ENCODE measurements at regions of chr4 and their contacts with region 1.

Region 1: GRCh38 chr4:2963175-2963965 is at the starts of genes GRK4 and NOP14:
- DNase-seq: peak; percentile 98
- ATAC-seq: peak; percentile 93
- H3K4me3 ChIP-seq: peak within 1 kb of the TSS; percentile 48 to 86 (median 74)
- H3K4me3 Mint-ChIP-seq: peak within 1 kb of the TSS; percentile 96
- H3K27ac ChIP-seq: peak within 1 kb of the TSS; percentile 78 to 91
- H3K27ac Mint-ChIP-seq: peak within 1 kb of the TSS; percentile 96
- H3K4me1 ChIP-seq: peaks cover 20 to 25% of the 10 kb centered on the region in 2 donors
- H3K4me1 Mint-ChIP-seq: peaks cover 28% of the 10 kb centered on the region
- H3K27me3 ChIP-seq: no peaks in the 10 kb centered on the region
- H3K27me3 Mint-ChIP-seq: no peaks in the 10 kb centered on the region
- CTCF ChIP-seq: peak; percentile 48
- total RNA-seq, gene GRK4: 1.5 and 2.3 TPM in 2 replicates
- total RNA-seq, gene NOP14: 27.1 and 30.4 TPM in 2 replicates

Region 2: DNA sequence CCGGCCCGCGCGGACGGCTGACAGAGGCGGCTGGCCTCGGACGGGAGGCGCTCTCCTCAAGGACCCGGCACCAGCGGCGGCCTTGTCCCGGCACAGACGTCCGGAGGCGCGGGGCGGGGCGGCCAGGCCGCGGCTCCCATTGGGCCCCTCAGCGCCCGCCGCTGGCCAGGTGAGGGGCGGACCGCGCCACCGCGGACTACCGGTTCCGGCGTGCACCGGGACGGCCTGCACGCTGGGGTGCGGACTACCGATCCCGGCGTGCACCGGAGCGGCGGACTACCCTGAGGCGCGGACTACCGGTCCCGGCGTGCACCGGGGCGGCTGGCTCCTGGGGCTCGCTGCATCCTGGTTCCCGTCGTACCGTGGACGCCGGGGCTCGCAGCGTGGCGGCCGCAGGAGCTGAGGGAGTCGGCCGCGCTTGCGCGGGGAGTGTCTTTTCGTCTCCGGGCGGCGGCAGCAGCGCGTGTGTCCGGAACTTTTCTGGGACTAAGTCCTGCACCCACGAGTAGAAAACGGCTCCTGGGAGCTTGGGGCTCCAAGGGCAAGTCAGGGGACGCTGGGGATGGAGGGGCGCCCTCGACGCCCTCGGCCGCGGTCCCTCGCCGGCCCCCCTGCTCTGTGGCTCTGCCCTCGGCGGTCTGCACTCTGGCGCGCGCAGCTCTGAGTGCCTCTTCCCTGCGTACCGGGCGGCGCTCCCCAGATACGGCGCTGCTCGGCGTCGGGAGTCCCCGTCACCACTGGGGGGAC is 1107.2 kb before region 1 on chr4 and contains the start of gene LETM1:
- CTCF ChIA-PET with region 1: no interaction called
- POLR2A ChIA-PET with region 1: no interaction called
- intact Hi-C with region 1: loop called (anchors 5 kb)
- DNase-seq: peak; percentile 92
- ATAC-seq: peak; percentile 96
- H3K4me3 ChIP-seq: peak within 1 kb of the TSS; percentile 38 to 93 (median 90)
- H3K4me3 Mint-ChIP-seq: peak within 1 kb of the TSS; percentile 85
- H3K27ac ChIP-seq: peak within 1 kb of the TSS in 1 of 2 donors; percentile 61
- H3K27ac Mint-ChIP-seq: peak within 1 kb of the TSS; percentile 56
- H3K4me1 ChIP-seq: peaks cover 15 to 19% of the 10 kb centered on the region in 2 donors
- H3K4me1 Mint-ChIP-seq: peaks cover 23% of the 10 kb centered on the region
- H3K27me3 ChIP-seq: peaks cover 0 to 3% (median 0%) of the 10 kb centered on the region in 4 experiments
- H3K27me3 Mint-ChIP-seq: no peaks in the 10 kb centered on the region
- CTCF ChIP-seq: peak; percentile 17
- total RNA-seq, gene LETM1: 44.8 and 45.1 TPM in 2 replicates

Region 3: DNA sequence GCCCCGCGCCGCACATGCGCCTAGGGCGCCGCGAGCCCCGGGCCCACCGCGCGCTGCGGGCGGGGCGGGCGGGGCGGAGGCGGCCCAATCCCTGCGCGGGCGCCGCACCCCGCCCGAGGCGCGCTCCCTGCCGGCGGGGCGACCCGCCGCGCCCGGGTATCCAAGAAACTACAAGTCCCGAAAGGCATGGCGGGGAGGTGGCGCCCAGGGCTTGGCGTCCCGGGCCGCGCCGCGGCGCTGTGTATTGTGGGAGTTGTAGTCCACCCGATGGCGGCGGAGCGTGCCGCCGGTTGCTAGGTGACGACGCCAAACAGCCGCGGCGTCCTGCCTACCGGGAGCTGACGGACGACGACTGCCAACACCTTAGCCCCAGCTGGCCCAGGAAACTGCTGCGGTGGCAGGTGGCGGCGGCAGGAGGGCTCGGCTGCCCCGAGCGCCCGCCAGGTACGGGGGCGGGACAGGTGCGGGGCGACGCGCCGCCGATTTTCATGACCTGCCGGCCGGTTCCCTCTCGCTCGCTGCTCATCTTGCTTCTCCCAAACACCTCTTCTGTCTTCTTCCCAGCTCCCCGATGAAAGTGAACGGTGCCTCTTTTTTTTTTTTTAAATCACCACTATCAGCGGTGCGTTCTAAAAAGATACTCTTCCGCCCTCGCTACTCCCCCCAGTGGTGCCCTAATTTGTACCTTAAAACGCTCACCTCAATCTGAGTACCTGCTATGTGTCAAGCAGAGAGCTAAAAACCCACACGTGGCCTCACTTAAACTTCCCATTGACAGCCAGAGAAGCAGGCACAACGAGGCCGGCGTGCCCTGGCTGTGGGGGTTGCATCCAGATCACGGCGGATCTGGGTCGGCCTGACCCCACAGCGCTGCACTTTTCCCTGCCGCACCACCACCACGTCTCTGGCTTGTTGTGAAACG is 544.5 kb before region 1 on chr4 and contains the start of gene CFAP99:
- CTCF ChIA-PET with region 1: interaction called, 3 read pairs
- POLR2A ChIA-PET with region 1: no interaction called
- intact Hi-C with region 1: loop called (anchors 1 kb)
- DNase-seq: peak; percentile 99
- ATAC-seq: peak; percentile 92
- H3K4me3 ChIP-seq: peak within 1 kb of the TSS; percentile 2 to 72 (median 51)
- H3K4me3 Mint-ChIP-seq: peak within 1 kb of the TSS; percentile 89
- H3K27ac ChIP-seq: peak within 1 kb of the TSS; percentile 29 to 76
- H3K27ac Mint-ChIP-seq: peak within 1 kb of the TSS; percentile 89
- H3K4me1 ChIP-seq: peaks cover 34 to 38% of the 10 kb centered on the region in 2 donors
- H3K4me1 Mint-ChIP-seq: peaks cover 44% of the 10 kb centered on the region
- H3K27me3 ChIP-seq: peaks cover 0 to 64% (median 33%) of the 10 kb centered on the region in 4 experiments
- H3K27me3 Mint-ChIP-seq: peaks cover 40% of the 10 kb centered on the region
- CTCF ChIP-seq: peak; percentile 41
- total RNA-seq, gene CFAP99: not detected in 2 replicates

Region 4: DNA sequence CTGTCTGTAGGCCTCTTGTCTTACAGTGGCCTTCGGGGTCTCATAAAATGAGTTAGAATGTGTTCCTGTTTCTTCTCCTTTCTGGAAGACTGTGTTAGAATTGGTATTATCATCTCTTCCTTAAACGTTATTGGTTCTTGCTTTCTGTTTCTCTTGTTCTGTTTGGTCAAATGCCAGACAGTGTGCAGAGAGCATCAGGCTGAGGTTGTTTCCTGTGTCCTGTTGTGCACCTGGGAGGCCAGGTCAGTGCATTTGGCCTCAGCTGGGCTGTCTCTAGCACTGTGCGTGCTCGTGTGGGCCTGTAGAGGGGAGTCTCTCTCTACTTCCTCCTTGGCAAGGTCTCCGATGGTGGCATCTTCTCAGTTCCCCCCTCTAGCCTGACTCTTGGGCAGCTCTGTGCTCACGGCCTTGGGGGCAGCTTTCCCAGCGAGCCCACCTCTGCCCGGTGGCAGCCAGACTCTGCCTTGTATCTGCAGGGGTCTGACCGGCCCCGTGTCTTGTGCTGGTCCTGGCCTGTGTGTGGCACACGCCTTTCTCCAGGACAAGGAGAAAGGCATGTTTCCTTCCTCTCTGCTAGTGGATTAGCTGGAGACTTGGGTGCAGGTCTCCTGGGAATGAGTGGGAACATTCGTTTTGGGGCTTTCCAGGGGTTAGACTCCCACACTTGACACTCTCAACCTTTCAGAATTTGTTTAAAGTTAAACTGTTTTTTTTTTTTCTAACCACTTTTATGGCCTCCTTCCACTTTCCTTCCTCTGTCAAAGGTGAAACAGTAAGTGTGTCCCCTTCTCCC is 364.7 kb before region 1 on chr4:
- CTCF ChIA-PET with region 1: no interaction called
- POLR2A ChIA-PET with region 1: no interaction called
- intact Hi-C with region 1: loop called (anchors 5 kb)
- DNase-seq: peak; percentile 81
- ATAC-seq: peak; percentile 94
- H3K4me3 ChIP-seq: peak overlapping the region in 1 of 5 experiments; percentile 8
- H3K4me3 Mint-ChIP-seq: peak overlapping the region; percentile 66
- H3K27ac ChIP-seq: peak overlapping the region; percentile 51 to 67
- H3K27ac Mint-ChIP-seq: peak overlapping the region; percentile 91
- H3K4me1 ChIP-seq: peaks cover 42 to 47% of the 10 kb centered on the region in 2 donors
- H3K4me1 Mint-ChIP-seq: peaks cover 60% of the 10 kb centered on the region
- H3K27me3 ChIP-seq: no peaks in the 10 kb centered on the region
- H3K27me3 Mint-ChIP-seq: no peaks in the 10 kb centered on the region
- CTCF ChIP-seq: peak; percentile 66

Region 5: DNA sequence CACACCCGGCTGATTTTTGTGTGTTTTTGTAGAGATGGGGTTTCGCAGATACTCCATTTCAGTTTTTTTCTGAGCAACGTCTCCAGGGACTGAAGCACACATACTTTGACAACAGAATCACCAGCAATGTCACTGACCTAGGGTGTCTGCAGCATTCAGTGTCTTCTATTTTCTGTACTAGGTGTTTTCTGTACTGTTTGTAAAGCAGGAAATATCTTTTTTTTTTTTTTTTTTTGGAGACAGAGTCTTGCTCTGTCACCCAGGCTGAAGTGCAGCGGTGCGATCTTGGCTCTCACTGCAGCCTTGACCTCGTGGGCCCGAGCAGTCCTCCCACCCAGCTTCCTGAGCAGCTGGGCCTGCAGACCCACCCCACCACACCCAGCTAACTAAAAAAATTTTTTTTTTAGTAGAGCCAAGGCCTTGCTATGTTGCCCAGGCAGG is 110.9 kb before region 1 on chr4:
- CTCF ChIA-PET with region 1: no interaction called
- POLR2A ChIA-PET with region 1: interaction called, 3 read pairs
- intact Hi-C with region 1: loop called (anchors 5 kb)
- DNase-seq: peak; percentile 87
- ATAC-seq: peak; percentile 83
- H3K4me3 ChIP-seq: peak overlapping the region; percentile 8 to 48 (median 23)
- H3K4me3 Mint-ChIP-seq: peak overlapping the region; percentile 76
- H3K27ac ChIP-seq: peak overlapping the region; percentile 72 to 81
- H3K27ac Mint-ChIP-seq: peak overlapping the region; percentile 79
- H3K4me1 ChIP-seq: peaks cover 88% of the 10 kb centered on the region in 2 donors
- H3K4me1 Mint-ChIP-seq: peaks cover 76% of the 10 kb centered on the region
- H3K27me3 ChIP-seq: no peaks in the 10 kb centered on the region
- H3K27me3 Mint-ChIP-seq: no peaks in the 10 kb centered on the region
- CTCF ChIP-seq: no peak

Region 6: DNA sequence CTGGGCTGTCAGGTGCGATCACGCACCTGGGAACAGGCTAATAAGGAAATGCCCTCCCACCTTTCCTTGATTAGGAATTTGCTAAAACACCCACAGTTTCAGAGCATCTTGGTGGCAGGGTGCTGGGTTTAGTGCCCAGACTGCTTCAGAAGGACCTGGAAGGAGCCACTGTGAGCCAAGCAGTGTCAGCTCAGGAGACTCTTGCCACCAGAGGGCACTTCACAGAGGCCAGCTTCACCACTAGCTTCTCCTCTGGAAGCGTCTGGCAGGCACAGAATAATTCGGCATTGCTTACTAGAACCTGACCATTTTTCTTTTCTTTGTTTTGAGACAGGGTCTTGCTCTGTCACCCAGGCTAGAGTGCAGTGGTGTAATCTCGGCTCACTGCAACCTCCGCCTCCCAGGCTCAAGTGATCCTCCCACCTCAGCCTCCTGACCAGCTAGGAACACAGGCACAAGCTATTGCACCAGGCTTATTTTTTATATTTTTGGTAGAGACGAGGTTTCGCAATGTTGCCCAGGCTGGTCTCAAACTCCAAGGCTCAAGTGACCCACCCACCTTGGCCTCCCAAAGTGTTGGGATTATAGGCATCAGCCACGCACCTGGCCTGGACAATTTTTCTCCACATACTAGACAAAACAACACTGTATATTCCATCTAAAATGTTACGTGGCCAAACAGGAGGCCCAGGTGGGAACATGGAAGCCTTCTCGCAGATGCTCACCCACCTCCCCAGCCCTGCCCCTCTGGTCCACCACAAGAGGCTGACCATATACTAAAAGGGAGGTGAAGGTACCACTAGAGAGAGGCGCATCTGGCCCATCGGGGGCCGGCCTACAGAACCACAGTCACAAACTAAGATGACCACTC is 14.2 kb before region 1 on chr4:
- CTCF ChIA-PET with region 1: interaction called, 10 read pairs
- POLR2A ChIA-PET with region 1: interaction called, 4 read pairs
- intact Hi-C with region 1: no loop called
- DNase-seq: no peak
- ATAC-seq: peak; percentile 41
- H3K4me3 ChIP-seq: no peak overlapping the region
- H3K4me3 Mint-ChIP-seq: no peak overlapping the region
- H3K27ac ChIP-seq: no peak overlapping the region
- H3K27ac Mint-ChIP-seq: no peak overlapping the region
- H3K4me1 ChIP-seq: no peaks in the 10 kb centered on the region
- H3K4me1 Mint-ChIP-seq: no peaks in the 10 kb centered on the region
- H3K27me3 ChIP-seq: no peaks in the 10 kb centered on the region
- H3K27me3 Mint-ChIP-seq: no peaks in the 10 kb centered on the region
- CTCF ChIP-seq: peak; percentile 20

Region 7: GRCh38 chr4:3047464-3048286 is 84.3 kb after region 1 on chr4:
- CTCF ChIA-PET with region 1: no interaction called
- POLR2A ChIA-PET with region 1: no interaction called
- intact Hi-C with region 1: loop called (anchors 2 kb)
- DNase-seq: peak; percentile 95
- ATAC-seq: peak; percentile 92
- H3K4me3 ChIP-seq: peak overlapping the region in 2 of 5 experiments; percentile 6 to 30
- H3K4me3 Mint-ChIP-seq: peak overlapping the region; percentile 71
- H3K27ac ChIP-seq: peak overlapping the region; percentile 92 to 97
- H3K27ac Mint-ChIP-seq: peak overlapping the region; percentile 91
- H3K4me1 ChIP-seq: peaks cover 42 to 61% of the 10 kb centered on the region in 2 donors
- H3K4me1 Mint-ChIP-seq: peaks cover 44% of the 10 kb centered on the region
- H3K27me3 ChIP-seq: no peaks in the 10 kb centered on the region
- H3K27me3 Mint-ChIP-seq: no peaks in the 10 kb centered on the region
- CTCF ChIP-seq: peak; percentile 78